Psoas muscle (tissue), 8 donors: ENCODE measurements at regions of chr2 and their contacts with region 1.

Region 1: GRCh38 chr2:115011721-115012120 is 569.3 kb downstream of the DPP10 start:
- DNase-seq: no peak
- ATAC-seq: no peak
- H3K4me3 ChIP-seq: no peak overlapping the region
- H3K27ac ChIP-seq: no peak overlapping the region
- H3K4me1 ChIP-seq: no peaks in the 10 kb centered on the region
- H3K27me3 ChIP-seq: no peaks in the 10 kb centered on the region
- CTCF ChIP-seq: no peak

Region 2: GRCh38 chr2:114968748-114969400 is 42.8 kb before region 1 on chr2:
- intact Hi-C with region 1: loop called in 1 of 2 experiments (anchors 1 kb)
- DNase-seq: no peak
- ATAC-seq: no peak
- H3K4me3 ChIP-seq: no peak overlapping the region
- H3K27ac ChIP-seq: no peak overlapping the region
- H3K4me1 ChIP-seq: no peaks in the 10 kb centered on the region
- H3K27me3 ChIP-seq: no peaks in the 10 kb centered on the region
- CTCF ChIP-seq: no peak